ENCODE measurements at regions of chr6 and their contacts with region 1.

Region 1: GRCh38 chr6:32113386-32114352 is 4.5 kb upstream of the TNXB start:
- DNase-seq: peak; percentile 46
- H3K4me3 ChIP-seq: no peak overlapping the region
- CTCF ChIP-seq: peak; percentile 63

Region 2: DNA sequence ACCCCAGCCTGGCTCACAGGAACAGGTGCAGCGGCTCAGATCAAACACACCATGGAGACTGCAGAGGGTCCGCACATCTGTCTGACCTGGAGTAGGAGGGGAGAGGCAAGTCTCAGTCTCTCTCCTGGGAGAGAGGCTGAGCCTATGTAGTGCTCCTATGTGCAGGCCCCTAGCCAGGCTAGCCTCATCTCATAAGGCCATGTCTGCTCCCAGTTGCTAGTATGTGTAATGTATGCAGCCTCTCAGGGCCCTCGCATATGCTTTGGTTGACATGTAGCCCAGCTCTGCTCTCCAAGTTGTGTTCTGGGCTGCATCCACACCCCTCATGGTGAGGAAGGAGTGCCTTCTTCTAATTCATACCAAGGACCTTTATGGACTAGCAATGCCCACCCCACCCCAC is 16.3 kb before region 1 on chr6:
- CTCF ChIA-PET with region 1: interaction called, 66 read pairs
- POLR2A ChIA-PET with region 1: interaction called, 5 read pairs
- DNase-seq: no peak
- H3K4me3 ChIP-seq: no peak overlapping the region
- CTCF ChIP-seq: no peak

Region 3: GRCh38 chr6:32127717-32128592 is 14.3 kb after region 1 on chr6 and contains the start of gene ATF6B:
- CTCF ChIA-PET with region 1: interaction called, 111 read pairs
- POLR2A ChIA-PET with region 1: interaction called, 12 read pairs
- DNase-seq: peak; percentile 99
- H3K4me3 ChIP-seq: peak within 1 kb of the TSS; percentile 97
- CTCF ChIP-seq: no peak